ENCODE measurements at regions of chr7 and their contacts with region 1.

Region 1: GRCh38 chr7:146405737-146406136 is 289.1 kb downstream of the CNTNAP2 start:
- DNase-seq: no peak
- ATAC-seq: no peak
- H3K4me3 ChIP-seq: no peak overlapping the region
- H3K4me3 Mint-ChIP-seq: no peak overlapping the region
- H3K27ac ChIP-seq: no peak overlapping the region
- H3K27ac Mint-ChIP-seq: no peak overlapping the region
- H3K4me1 ChIP-seq: no peaks in the 10 kb centered on the region
- H3K4me1 Mint-ChIP-seq: no peaks in the 10 kb centered on the region
- H3K27me3 ChIP-seq: no peaks in the 10 kb centered on the region
- H3K27me3 Mint-ChIP-seq: no peaks in the 10 kb centered on the region
- CTCF ChIP-seq: no peak

Region 2: GRCh38 chr7:146290746-146291145 is 115.0 kb before region 1 on chr7:
- CTCF ChIA-PET with region 1: no interaction called
- POLR2A ChIA-PET with region 1: no interaction called
- intact Hi-C with region 1: no loop called
- DNase-seq: no peak
- ATAC-seq: no peak
- H3K4me3 ChIP-seq: no peak overlapping the region
- H3K4me3 Mint-ChIP-seq: no peak overlapping the region
- H3K27ac ChIP-seq: no peak overlapping the region
- H3K27ac Mint-ChIP-seq: no peak overlapping the region
- H3K4me1 ChIP-seq: no peaks in the 10 kb centered on the region
- H3K4me1 Mint-ChIP-seq: no peaks in the 10 kb centered on the region
- H3K27me3 ChIP-seq: no peaks in the 10 kb centered on the region
- H3K27me3 Mint-ChIP-seq: no peaks in the 10 kb centered on the region
- CTCF ChIP-seq: no peak

Region 3: GRCh38 chr7:146387140-146387539 is 18.6 kb before region 1 on chr7:
- CTCF ChIA-PET with region 1: no interaction called
- POLR2A ChIA-PET with region 1: no interaction called
- intact Hi-C with region 1: no loop called
- DNase-seq: no peak
- ATAC-seq: no peak
- H3K4me3 ChIP-seq: no peak overlapping the region
- H3K4me3 Mint-ChIP-seq: no peak overlapping the region
- H3K27ac ChIP-seq: no peak overlapping the region
- H3K27ac Mint-ChIP-seq: no peak overlapping the region
- H3K4me1 ChIP-seq: no peaks in the 10 kb centered on the region
- H3K4me1 Mint-ChIP-seq: no peaks in the 10 kb centered on the region
- H3K27me3 ChIP-seq: no peaks in the 10 kb centered on the region
- H3K27me3 Mint-ChIP-seq: no peaks in the 10 kb centered on the region
- CTCF ChIP-seq: no peak

Region 4: GRCh38 chr7:146423446-146423845 is 17.7 kb after region 1 on chr7:
- CTCF ChIA-PET with region 1: no interaction called
- POLR2A ChIA-PET with region 1: no interaction called
- intact Hi-C with region 1: no loop called
- DNase-seq: no peak
- ATAC-seq: no peak
- H3K4me3 ChIP-seq: no peak overlapping the region
- H3K4me3 Mint-ChIP-seq: no peak overlapping the region
- H3K27ac ChIP-seq: no peak overlapping the region
- H3K27ac Mint-ChIP-seq: no peak overlapping the region
- H3K4me1 ChIP-seq: no peaks in the 10 kb centered on the region
- H3K4me1 Mint-ChIP-seq: no peaks in the 10 kb centered on the region
- H3K27me3 ChIP-seq: no peaks in the 10 kb centered on the region
- H3K27me3 Mint-ChIP-seq: no peaks in the 10 kb centered on the region
- CTCF ChIP-seq: no peak

Region 5: DNA sequence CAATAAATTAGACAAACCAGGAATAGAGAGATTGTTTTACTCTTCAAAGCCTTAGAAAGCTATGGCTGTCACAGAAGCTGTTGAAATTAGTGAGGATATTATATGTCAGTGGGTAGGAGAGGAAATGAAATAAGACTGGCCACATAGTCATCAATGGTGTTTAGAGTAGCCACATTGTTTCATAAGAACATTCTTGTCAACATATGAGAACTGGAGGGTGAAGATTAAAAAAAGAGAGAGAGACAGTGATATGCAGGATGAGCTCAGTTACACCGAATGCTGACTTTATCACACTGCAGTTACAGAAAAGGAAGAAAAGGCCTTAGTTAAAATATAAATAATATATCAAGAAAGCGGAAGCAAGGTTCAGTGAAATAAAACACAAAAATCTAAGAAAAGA is 122.8 kb after region 1 on chr7:
- CTCF ChIA-PET with region 1: no interaction called
- POLR2A ChIA-PET with region 1: no interaction called
- intact Hi-C with region 1: no loop called
- DNase-seq: no peak
- ATAC-seq: no peak
- H3K4me3 ChIP-seq: no peak overlapping the region
- H3K4me3 Mint-ChIP-seq: no peak overlapping the region
- H3K27ac ChIP-seq: no peak overlapping the region
- H3K27ac Mint-ChIP-seq: no peak overlapping the region
- H3K4me1 ChIP-seq: no peaks in the 10 kb centered on the region
- H3K4me1 Mint-ChIP-seq: no peaks in the 10 kb centered on the region
- H3K27me3 ChIP-seq: no peaks in the 10 kb centered on the region
- H3K27me3 Mint-ChIP-seq: no peaks in the 10 kb centered on the region
- CTCF ChIP-seq: no peak

Region 6: GRCh38 chr7:147670759-147671158 is 1265.0 kb after region 1 on chr7:
- CTCF ChIA-PET with region 1: no interaction called
- POLR2A ChIA-PET with region 1: no interaction called
- intact Hi-C with region 1: loop called in 1 of 2 experiments (anchors 10 kb)
- DNase-seq: no peak
- ATAC-seq: no peak
- H3K4me3 ChIP-seq: no peak overlapping the region
- H3K4me3 Mint-ChIP-seq: no peak overlapping the region
- H3K27ac ChIP-seq: no peak overlapping the region
- H3K27ac Mint-ChIP-seq: no peak overlapping the region
- H3K4me1 ChIP-seq: no peaks in the 10 kb centered on the region
- H3K4me1 Mint-ChIP-seq: no peaks in the 10 kb centered on the region
- H3K27me3 ChIP-seq: no peaks in the 10 kb centered on the region
- H3K27me3 Mint-ChIP-seq: no peaks in the 10 kb centered on the region
- CTCF ChIP-seq: no peak